Activated CD4-positive, alpha-beta T cell treated with anti-CD3 and anti-CD28 coated beads, Interleukin-2, amount 10 ng/mL, durations not matched to agents 24 days and 14 days (primary cell): ENCODE measurements at regions of chr5 and their contacts with region 1.

Region 1: DNA sequence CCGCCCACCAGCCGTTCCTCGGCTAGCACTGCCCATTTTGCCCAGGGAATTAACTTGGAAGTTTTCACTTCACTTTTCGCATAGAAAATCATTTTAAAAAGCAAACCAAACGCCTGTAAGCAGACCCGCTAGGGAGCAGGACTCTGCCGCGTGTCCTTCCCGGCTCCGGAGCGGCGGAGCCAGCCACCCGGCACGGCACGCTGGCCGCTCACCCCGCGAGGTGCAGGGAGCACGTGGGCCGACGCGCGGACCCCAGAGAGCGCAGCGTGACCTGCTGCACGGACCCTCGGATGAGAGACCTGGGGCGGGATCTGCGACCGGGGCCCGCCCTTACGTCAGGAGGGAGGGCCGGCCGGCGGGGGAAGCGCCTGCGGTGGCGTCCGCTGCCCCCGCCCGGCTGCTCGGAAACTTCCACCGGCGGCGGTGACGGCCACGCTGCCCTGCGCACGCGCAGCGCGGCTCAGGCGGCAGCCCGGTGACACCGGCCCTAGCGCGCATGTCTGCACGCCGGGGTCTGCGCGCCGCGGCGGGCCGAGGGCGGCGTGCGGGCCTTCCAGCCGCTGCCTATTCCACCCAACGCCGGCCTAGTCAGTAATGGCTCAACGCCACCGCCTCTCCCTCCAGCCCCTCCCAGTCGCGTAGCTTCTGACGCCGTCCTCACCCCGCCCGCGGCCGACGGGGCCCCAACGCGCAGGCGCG is 506 bp upstream of the TENT4A start:
- DNase-seq: peak; percentile 99
- H3K4me3 Mint-ChIP-seq: peak overlapping the region; percentile 89
- H3K27ac Mint-ChIP-seq: peak overlapping the region; percentile 97
- H3K4me1 Mint-ChIP-seq: peaks cover 35% of the 10 kb centered on the region
- H3K27me3 Mint-ChIP-seq: no peaks in the 10 kb centered on the region

Region 2: GRCh38 chr5:6737023-6737941 is 24.6 kb after region 1 on chr5:
- intact Hi-C with region 1: loop called (anchors 2 kb)
- DNase-seq: no peak
- H3K4me3 Mint-ChIP-seq: peak overlapping the region; percentile 42
- H3K27ac Mint-ChIP-seq: peak overlapping the region; percentile 84
- H3K4me1 Mint-ChIP-seq: peaks cover 45% of the 10 kb centered on the region
- H3K27me3 Mint-ChIP-seq: no peaks in the 10 kb centered on the region

Region 3: GRCh38 chr5:7868773-7869473 is 1156.2 kb after region 1 on chr5 and contains the starts of genes FASTKD3 and MTRR:
- intact Hi-C with region 1: loop called (anchors 5 kb)
- DNase-seq: peak; percentile 97
- H3K4me3 Mint-ChIP-seq: peak within 1 kb of the TSS; percentile 99
- H3K27ac Mint-ChIP-seq: peak within 1 kb of the TSS; percentile 92
- H3K4me1 Mint-ChIP-seq: peaks cover 64% of the 10 kb centered on the region
- H3K27me3 Mint-ChIP-seq: no peaks in the 10 kb centered on the region
- total RNA-seq, gene FASTKD3: 17.7 and 18.3 TPM in 2 replicates
- total RNA-seq, gene MTRR: 64.4 and 76.8 TPM in 2 replicates